CD8-positive, alpha-beta T cell (primary cell): ENCODE measurements at regions of chr11 and their contacts with region 1.

Region 1: GRCh38 chr11:80980221-80980620 is 1539.4 kb upstream of the TENM4 start:
- DNase-seq: no peak
- ATAC-seq: no peak
- H3K4me3 ChIP-seq: no peak overlapping the region
- H3K4me3 Mint-ChIP-seq: no peak overlapping the region
- H3K27ac ChIP-seq: no peak overlapping the region
- H3K27ac Mint-ChIP-seq: no peak overlapping the region
- H3K4me1 ChIP-seq: no peaks in the 10 kb centered on the region
- H3K4me1 Mint-ChIP-seq: no peaks in the 10 kb centered on the region
- H3K27me3 ChIP-seq: no peaks in the 10 kb centered on the region
- H3K27me3 Mint-ChIP-seq: no peaks in the 10 kb centered on the region
- CTCF ChIP-seq: no peak

Region 2: GRCh38 chr11:80798174-80798573 is 182.0 kb before region 1 on chr11:
- CTCF ChIA-PET with region 1: no interaction called
- POLR2A ChIA-PET with region 1: no interaction called
- intact Hi-C with region 1: no loop called
- DNase-seq: no peak
- ATAC-seq: no peak
- H3K4me3 ChIP-seq: no peak overlapping the region
- H3K4me3 Mint-ChIP-seq: no peak overlapping the region
- H3K27ac ChIP-seq: no peak overlapping the region
- H3K27ac Mint-ChIP-seq: no peak overlapping the region
- H3K4me1 ChIP-seq: no peaks in the 10 kb centered on the region
- H3K4me1 Mint-ChIP-seq: no peaks in the 10 kb centered on the region
- H3K27me3 ChIP-seq: no peaks in the 10 kb centered on the region
- H3K27me3 Mint-ChIP-seq: no peaks in the 10 kb centered on the region
- CTCF ChIP-seq: no peak

Region 3: DNA sequence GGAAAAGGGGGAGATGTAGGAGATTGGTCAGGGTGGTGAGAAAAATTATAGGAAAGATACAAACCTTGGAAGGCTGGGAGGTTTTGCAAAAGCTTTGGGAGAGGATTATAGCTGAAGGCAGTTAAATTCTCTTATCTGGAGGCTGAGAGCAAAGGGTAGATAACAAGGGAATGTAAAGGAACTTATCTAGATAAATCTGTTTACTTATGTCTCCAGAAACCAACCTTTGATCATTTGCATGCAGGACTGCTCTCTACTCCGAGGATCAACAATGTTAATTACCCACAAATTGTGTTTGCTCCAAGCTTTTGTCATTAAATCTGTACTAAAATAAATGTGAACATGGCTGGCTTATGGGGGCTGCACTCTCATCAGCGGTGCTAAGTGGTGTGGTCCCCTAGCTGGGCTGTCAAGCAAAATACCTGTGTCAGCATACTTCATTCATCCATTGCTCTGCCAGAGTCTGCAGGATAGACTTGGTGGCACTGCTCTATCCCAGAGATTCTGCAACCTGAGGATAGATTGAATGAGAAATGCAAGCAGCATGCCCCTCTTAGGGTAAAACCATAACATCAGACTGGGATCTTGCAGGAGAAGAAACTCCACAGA is 59.8 kb after region 1 on chr11:
- CTCF ChIA-PET with region 1: no interaction called
- POLR2A ChIA-PET with region 1: no interaction called
- intact Hi-C with region 1: loop called in 1 of 2 experiments (anchors 10 kb)
- DNase-seq: no peak
- ATAC-seq: no peak
- H3K4me3 ChIP-seq: no peak overlapping the region
- H3K4me3 Mint-ChIP-seq: no peak overlapping the region
- H3K27ac ChIP-seq: no peak overlapping the region
- H3K27ac Mint-ChIP-seq: no peak overlapping the region
- H3K4me1 ChIP-seq: no peaks in the 10 kb centered on the region
- H3K4me1 Mint-ChIP-seq: no peaks in the 10 kb centered on the region
- H3K27me3 ChIP-seq: no peaks in the 10 kb centered on the region
- H3K27me3 Mint-ChIP-seq: no peaks in the 10 kb centered on the region
- CTCF ChIP-seq: no peak